AG04450 (cell line): ENCODE measurements at regions of chr17 and their contacts with region 1.

Region 1: DNA sequence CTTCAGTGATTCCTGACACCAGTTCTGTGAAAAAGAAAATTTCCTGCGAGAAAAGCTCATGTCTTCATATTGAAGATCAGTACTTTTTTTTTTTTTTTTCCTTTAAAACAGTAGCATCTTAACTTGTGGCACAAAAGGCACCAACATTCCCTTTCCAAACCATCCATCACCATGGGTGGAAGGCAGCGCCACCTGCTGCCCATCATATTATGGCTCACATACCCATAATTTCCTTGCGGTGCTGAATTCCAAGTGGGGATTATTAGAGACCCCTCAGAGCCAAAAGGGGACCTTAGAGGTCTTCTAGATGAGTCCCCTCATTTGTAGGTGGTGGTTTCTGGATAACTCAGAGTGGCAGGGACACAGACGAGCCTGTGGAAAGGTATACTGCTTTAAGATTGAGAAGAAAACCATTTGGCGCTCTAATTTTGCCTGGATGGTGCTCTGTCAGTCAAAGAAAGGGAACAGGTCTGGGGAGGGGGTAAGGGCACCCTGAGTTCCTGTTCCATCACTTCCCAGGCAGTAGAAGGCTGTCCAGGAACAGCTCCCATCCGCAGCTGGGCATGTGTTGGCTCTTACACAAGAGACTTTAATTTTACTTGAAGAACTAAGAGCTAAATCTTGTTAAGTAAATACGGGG is 7.9 kb upstream of the SOST start:
- DNase-seq: no peak
- H3K4me3 ChIP-seq: no peak overlapping the region
- H3K27ac ChIP-seq: no peak overlapping the region
- H3K27me3 ChIP-seq: no peaks in the 10 kb centered on the region
- CTCF ChIP-seq: peak; percentile 82

Region 2: GRCh38 chr17:43753493-43754129 is 12.9 kb before region 1 on chr17:
- CTCF ChIA-PET with region 1: interaction called, 12 read pairs
- POLR2A ChIA-PET with region 1: no interaction called
- DNase-seq: no peak
- H3K4me3 ChIP-seq: no peak overlapping the region
- H3K27ac ChIP-seq: no peak overlapping the region
- H3K27me3 ChIP-seq: peaks cover 26% of the 10 kb centered on the region
- CTCF ChIP-seq: no peak